CD8-positive, alpha-beta memory T cell (primary cell): ENCODE measurements at regions of chr15 and their contacts with region 1.

Region 1: DNA sequence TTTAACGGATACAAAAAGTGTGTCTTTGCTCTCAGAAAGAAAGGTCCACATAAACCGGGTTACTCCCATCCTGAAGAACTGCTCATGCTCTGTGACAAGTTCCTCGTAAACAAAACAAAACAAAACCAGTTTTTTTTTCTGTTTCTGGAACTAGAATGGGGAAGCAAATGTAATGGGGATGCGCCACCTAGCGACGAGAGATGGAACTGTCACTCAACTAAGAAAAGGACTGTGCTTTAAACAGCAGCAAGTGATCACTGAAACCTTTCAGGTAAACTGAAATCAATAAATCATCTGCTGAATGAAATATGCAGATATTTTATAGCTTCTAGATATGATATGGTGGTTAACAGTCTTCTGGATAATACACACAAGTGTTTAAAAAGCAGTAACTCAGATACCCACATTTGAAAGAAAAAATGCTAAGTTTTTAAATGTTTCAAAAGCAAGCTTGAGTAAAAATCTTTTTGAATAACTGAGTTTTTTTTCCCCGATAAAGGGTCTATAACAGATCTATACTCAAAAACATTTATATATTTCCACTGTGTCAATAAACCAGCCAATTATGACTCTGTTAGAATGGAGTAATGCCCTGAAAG is 10.9 kb downstream of the TM2D3 start:
- DNase-seq: peak; percentile 52 to 81 (median 68)
- H3K4me3 ChIP-seq: no peak overlapping the region
- H3K4me3 Mint-ChIP-seq: peak overlapping the region in 2 of 7 donors; percentile 39 to 47
- H3K27ac ChIP-seq: peak overlapping the region; percentile 55
- H3K27ac Mint-ChIP-seq: peak overlapping the region; percentile 64 to 96 (median 92)
- H3K4me1 ChIP-seq: peaks cover 20% of the 10 kb centered on the region
- H3K4me1 Mint-ChIP-seq: peaks cover 26 to 32% (median 30%) of the 10 kb centered on the region in 3 donors
- H3K27me3 ChIP-seq: no peaks in the 10 kb centered on the region
- H3K27me3 Mint-ChIP-seq: no peaks in the 10 kb centered on the region

Region 2: GRCh38 chr15:101288908-101289513 is 352.3 kb before region 1 on chr15:
- CTCF ChIA-PET with region 1: interaction called, 31 read pairs
- POLR2A ChIA-PET with region 1: interaction called, 3 read pairs
- DNase-seq: peak in 2 of 5 donors; percentile 49 to 50
- H3K4me3 ChIP-seq: no peak overlapping the region
- H3K4me3 Mint-ChIP-seq: peak overlapping the region in 1 of 7 donors; percentile 35
- H3K27ac ChIP-seq: no peak overlapping the region
- H3K27ac Mint-ChIP-seq: peak overlapping the region in 7 of 8 donors; percentile 8 to 90 (median 75)
- H3K4me1 ChIP-seq: peaks cover 29% of the 10 kb centered on the region
- H3K4me1 Mint-ChIP-seq: peaks cover 45 to 69% (median 52%) of the 10 kb centered on the region in 3 donors
- H3K27me3 ChIP-seq: no peaks in the 10 kb centered on the region
- H3K27me3 Mint-ChIP-seq: no peaks in the 10 kb centered on the region

Region 3: DNA sequence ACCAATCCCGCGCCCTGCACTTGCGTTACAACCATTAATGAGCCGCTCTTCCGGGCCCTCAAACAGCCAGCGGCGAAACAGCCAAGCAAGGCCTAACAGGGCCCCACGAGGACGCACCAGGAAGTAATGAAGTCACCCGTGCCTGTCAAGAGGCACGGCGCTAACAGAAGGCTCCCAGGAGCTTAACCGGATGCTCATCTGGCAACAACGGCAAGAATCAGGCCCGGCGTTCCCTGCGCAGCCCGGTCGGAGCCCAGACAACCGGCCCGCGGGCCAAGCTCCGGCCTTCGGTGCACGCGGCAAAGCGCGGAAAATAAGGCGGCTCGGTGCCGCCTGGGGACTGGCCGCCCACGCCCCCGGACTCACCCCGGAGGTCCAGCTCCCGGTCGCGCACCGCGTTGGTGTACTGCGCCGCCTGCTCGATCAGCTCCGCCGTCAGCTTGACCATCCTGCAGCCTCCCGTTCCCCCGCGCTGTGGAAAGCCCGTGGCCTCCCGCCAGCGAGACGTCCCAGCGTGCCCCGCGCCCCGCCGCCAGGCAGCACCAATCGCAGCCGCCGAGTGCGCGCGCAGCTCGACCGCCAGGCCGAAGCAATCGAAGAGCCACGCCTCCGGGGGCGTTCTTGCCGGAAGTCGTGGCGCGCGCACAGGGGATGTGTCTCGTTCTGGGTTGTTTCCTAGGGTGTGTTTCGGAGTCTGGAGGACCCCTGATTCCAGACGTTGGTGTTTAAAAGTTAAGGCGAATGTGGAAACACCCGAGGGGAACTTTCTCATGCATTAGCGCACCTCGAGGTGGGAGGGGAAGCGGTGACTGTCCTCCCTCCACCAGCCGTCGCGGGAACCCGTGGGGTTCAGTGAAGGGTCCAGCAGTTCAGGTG is 346.3 kb before region 1 on chr15 and contains the start of gene SNRPA1:
- CTCF ChIA-PET with region 1: interaction called, 31 read pairs
- POLR2A ChIA-PET with region 1: interaction called, 3 read pairs
- DNase-seq: peak; percentile 95 to 99 (median 98)
- H3K4me3 ChIP-seq: peak within 1 kb of the TSS; percentile 93
- H3K4me3 Mint-ChIP-seq: peak within 1 kb of the TSS; percentile 91 to 96 (median 93)
- H3K27ac ChIP-seq: peak within 1 kb of the TSS; percentile 98
- H3K27ac Mint-ChIP-seq: peak within 1 kb of the TSS; percentile 87 to 98 (median 97)
- H3K4me1 ChIP-seq: peaks cover 28% of the 10 kb centered on the region
- H3K4me1 Mint-ChIP-seq: peaks cover 46 to 59% (median 48%) of the 10 kb centered on the region in 3 donors
- H3K27me3 ChIP-seq: no peaks in the 10 kb centered on the region
- H3K27me3 Mint-ChIP-seq: peaks cover 0 to 3% of the 10 kb centered on the region in 2 donors
- total RNA-seq, gene SNRPA1: 213 to 225 TPM

Region 4: GRCh38 chr15:101652098-101652782 is 11.0 kb after region 1 on chr15 and contains the start of gene TM2D3:
- CTCF ChIA-PET with region 1: interaction called, 22 read pairs
- POLR2A ChIA-PET with region 1: interaction called, 5 read pairs
- DNase-seq: peak; percentile 94 to 96 (median 96)
- H3K4me3 ChIP-seq: peak within 1 kb of the TSS; percentile 71
- H3K4me3 Mint-ChIP-seq: peak within 1 kb of the TSS; percentile 85 to 97 (median 94)
- H3K27ac ChIP-seq: peak within 1 kb of the TSS; percentile 92
- H3K27ac Mint-ChIP-seq: peak within 1 kb of the TSS; percentile 91 to 98 (median 98)
- H3K4me1 ChIP-seq: peaks cover 40% of the 10 kb centered on the region
- H3K4me1 Mint-ChIP-seq: peaks cover 28 to 50% (median 41%) of the 10 kb centered on the region in 3 donors
- H3K27me3 ChIP-seq: no peaks in the 10 kb centered on the region
- H3K27me3 Mint-ChIP-seq: no peaks in the 10 kb centered on the region
- total RNA-seq, gene TM2D3: 63.5 to 68.0 TPM